ENCODE measurements at regions of chr3 and their contacts with region 1.

Region 1: DNA sequence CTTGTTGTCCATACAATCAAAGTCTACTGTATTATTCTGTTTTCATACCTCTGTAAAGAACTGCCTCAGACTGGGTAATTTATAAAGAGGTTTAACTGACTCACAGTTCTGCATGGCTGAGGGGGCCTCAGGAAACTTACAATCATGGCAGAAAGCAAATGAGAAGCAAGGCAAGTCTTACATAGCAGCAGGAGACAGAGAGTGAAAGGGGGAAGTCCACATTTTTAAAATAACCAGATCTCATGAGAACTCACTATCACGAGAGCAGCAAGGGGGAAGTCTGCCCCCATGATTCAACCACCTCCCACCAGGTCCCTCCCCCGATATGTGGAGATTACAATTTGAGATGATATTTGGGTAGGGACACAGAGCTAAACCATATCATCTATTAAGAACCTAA is 724.6 kb upstream of the CBLB start:
- DNase-seq: no peak
- CTCF ChIP-seq: no peak

Region 2: GRCh38 chr3:106609666-106610301 is 16.4 kb after region 1 on chr3:
- CTCF ChIA-PET with region 1: interaction called, 16 read pairs
- POLR2A ChIA-PET with region 1: no interaction called
- DNase-seq: peak; percentile 27
- CTCF ChIP-seq: peak; percentile 78

Region 3: GRCh38 chr3:106765342-106765741 is 172.0 kb after region 1 on chr3:
- CTCF ChIA-PET with region 1: no interaction called
- POLR2A ChIA-PET with region 1: no interaction called
- DNase-seq: no peak
- CTCF ChIP-seq: no peak

Measured in GM10248 (cell line).